Astrocyte of the cerebellum (primary cell): ENCODE measurements at regions of chr12 and their contacts with region 1.

Region 1: DNA sequence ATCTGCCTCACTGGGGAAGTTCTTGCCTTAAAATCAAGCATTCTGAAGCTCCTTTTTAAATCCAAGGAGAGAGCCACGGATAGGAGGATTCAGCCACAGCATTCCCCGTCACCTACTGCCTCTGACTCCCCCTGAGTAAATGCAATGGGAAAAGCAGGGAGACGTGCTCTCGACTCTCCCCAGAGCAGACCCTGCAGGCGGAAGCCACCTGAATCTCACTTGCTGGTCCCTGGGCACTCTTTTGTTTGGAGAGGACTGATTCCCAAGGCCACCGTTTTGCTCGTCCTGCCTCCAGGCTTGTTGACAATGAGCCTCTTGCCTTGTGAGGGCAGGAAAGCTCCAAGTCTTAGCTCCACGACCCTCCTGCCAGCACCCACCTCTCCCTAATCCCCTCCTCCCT is 204.5 kb downstream of the SLC15A4 start:
- DNase-seq: no peak
- H3K4me3 ChIP-seq: no peak overlapping the region
- CTCF ChIP-seq: no peak

Region 2: GRCh38 chr12:128408669-128409068 is 210.6 kb before region 1 on chr12:
- in situ Hi-C with region 1: no loop called
- DNase-seq: no peak
- H3K4me3 ChIP-seq: no peak overlapping the region
- CTCF ChIP-seq: no peak

Region 3: GRCh38 chr12:128581321-128581761 is 37.9 kb before region 1 on chr12:
- in situ Hi-C with region 1: no loop called
- DNase-seq: no peak
- H3K4me3 ChIP-seq: no peak overlapping the region
- CTCF ChIP-seq: no peak

Region 4: GRCh38 chr12:128652136-128652751 is 33.0 kb after region 1 on chr12:
- in situ Hi-C with region 1: loop called (anchors 5 kb)
- DNase-seq: no peak
- H3K4me3 ChIP-seq: no peak overlapping the region
- CTCF ChIP-seq: no peak

Region 5: DNA sequence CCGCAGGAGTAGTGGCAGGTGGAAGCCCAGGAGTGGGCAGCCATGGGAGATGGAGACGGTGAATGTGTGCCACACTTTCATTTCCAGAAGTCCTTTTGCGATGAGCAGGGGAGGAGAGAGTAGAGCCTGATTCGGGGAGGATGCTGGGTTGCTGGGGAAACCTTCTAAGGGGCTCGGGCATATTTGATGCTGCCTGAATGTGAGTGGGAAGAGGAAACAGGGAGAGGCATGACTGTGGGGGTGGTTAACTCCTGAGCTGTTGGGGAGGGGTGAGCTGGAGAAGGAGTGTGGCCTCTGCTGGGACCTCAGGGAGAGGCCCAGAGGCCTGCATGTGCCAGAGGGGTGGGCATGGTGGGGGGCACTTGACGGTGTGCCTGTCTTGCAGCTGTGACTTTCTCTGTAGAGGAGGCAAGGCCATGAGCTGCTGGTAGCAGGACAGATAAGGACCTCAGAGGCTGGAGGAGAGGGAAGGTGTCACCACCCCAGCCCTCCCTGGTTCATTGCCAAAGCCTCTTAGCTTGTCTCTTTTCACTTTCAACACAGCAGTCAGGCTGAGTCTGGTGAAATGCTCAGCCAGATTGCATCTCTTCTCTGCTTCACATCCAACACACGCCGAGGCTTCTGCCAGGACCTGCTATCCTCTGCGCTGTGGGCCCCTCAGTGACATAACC is 245.4 kb after region 1 on chr12:
- in situ Hi-C with region 1: no loop called
- DNase-seq: no peak
- H3K4me3 ChIP-seq: no peak overlapping the region
- CTCF ChIP-seq: no peak

Region 6: DNA sequence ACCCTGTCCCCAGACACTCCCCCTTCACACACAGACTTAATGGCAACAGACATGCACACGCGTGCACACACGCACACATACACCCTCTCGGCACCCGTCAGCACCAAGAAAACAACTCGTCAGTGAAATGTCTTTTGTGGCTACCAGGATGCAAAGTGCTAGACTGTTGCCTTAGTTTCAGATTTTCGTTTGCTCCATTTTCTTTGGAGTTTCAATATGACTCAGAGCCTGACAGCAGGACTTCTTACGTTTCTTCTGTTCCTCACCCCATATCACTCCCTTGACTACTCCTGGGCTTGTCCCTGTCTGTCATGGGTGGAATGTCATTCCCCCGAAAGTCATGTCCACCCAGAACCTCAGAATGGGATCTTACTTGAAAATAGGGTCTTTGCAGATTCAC is 416.9 kb after region 1 on chr12:
- in situ Hi-C with region 1: no loop called
- DNase-seq: no peak
- H3K4me3 ChIP-seq: no peak overlapping the region
- CTCF ChIP-seq: no peak